Activated naive CD4-positive, alpha-beta T cell treated with anti-CD3 and anti-CD28 coated beads for 36 hours (primary cell): ENCODE measurements at regions of chr6 and their contacts with region 1.

Region 1: DNA sequence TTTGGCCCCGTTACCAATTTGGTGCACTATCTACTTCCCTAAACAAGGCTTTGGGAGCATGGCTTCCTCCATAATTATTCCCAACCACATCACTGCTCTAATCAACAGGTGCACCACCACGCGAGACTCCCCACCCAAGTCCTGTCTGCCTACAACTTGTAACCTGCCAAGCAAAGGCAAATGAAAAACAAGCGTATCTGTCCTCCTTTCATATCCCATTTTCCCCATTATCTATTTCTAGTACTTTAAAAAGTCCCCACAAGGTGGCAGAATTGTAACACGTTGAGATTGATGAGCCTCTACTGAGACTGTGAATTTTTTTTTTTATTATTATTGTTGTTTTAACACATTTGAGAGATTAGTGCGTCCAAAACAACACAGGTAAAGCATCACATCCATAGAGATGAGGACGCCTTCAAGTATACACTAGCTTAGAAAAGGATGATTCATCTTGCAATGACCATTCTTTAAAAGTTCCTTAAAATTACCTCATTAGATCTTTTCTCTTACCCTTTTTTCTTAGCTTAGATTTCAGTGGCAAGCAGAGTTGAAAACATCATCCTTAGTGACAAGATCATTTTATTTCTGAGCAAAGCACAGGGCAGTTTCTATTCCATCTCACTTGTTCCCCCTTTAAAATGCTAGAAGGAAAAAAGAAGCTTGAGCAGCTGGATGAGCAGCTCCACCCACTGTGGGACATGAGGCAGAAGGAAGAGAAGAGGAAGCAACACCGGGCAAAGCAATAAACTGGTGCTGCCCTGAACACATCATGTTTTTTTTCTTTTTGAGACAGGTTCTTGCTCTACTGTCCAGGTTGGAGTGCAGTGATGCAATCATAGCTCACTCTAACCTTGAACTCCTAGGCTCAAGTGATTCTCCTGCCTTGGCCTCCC is 210.8 kb downstream of the ARHGAP18 start:
- DNase-seq: no peak
- H3K4me3 Mint-ChIP-seq: peak overlapping the region; percentile 64
- H3K27ac Mint-ChIP-seq: peak overlapping the region; percentile 91
- H3K4me1 Mint-ChIP-seq: peaks cover 72% of the 10 kb centered on the region
- H3K27me3 Mint-ChIP-seq: no peaks in the 10 kb centered on the region

Region 2: DNA sequence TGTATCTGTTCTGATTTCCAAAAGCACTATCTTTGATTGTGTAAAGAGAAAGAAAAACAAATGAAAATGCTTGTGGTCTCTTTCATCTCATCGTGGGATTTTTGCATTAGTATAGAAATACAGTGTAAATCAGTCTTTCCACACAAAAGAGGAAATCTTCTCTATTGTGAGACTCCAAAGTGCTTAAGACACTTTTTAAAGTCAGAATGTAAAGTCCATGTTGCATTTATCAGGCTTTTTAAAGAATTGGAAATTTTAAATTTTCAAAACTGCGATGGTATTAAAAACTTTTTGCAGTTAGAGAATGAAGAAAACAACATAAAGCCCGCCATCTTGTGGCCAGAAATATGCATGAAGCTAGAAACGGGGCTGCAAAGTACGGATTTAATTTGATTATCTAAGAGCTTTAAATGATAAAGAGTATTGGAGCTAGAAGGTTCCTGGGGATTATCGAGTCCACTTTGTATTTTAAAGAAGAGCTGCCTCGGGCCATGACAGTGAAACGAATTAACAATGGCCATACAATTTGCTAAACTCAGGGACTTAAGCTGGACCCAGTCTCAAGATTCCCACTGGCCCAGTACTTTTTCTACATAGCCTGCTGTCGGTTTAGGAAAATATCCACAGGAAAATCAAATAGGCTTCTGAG is 128.8 kb before region 1 on chr6:
- CTCF ChIA-PET with region 1: interaction called, 4 read pairs
- intact Hi-C with region 1: loop called (anchors 2 kb)
- DNase-seq: peak; percentile 77
- H3K4me3 Mint-ChIP-seq: no peak overlapping the region
- H3K27ac Mint-ChIP-seq: no peak overlapping the region
- H3K4me1 Mint-ChIP-seq: peaks cover 20% of the 10 kb centered on the region
- H3K27me3 Mint-ChIP-seq: no peaks in the 10 kb centered on the region

Region 3: DNA sequence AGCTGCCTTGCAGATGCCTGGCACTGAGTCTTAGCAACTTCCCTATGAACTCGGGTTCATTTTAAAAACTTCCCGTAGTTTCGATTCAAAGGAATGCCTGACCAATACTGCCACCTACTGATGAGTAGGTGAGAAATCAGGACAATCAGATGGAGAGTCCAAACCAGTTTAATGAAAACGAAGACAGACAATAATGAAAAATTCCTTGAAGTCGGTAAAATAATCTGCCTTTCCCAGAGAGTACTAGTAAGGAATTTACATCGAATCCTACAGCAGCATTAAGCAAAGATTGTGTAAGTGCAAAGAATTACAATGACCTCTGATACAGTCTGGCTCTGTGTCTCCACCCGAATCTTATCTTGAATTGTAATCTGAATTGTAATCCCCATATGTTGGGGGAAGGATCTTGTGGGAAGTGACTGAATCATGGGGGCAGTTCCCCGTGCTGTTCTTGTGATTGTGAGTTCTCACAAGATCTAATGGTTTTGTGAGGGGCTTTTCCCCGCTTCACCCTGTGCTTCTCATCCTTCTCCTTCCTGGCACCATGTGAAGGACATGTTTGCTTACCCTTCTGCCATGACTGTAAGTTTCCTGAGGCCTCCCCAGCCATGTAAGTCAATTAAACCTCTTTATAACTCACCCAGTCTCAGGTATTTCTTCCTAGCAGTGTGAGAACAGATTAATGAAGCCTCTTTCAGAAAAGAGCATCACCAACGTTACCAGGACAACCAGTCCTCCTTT is 76.4 kb after region 1 on chr6:
- CTCF ChIA-PET with region 1: interaction called, 9 read pairs
- intact Hi-C with region 1: loop called (anchors 1 kb)
- DNase-seq: no peak
- H3K4me3 Mint-ChIP-seq: no peak overlapping the region
- H3K27ac Mint-ChIP-seq: no peak overlapping the region
- H3K4me1 Mint-ChIP-seq: peaks cover 7% of the 10 kb centered on the region
- H3K27me3 Mint-ChIP-seq: no peaks in the 10 kb centered on the region

Region 4: DNA sequence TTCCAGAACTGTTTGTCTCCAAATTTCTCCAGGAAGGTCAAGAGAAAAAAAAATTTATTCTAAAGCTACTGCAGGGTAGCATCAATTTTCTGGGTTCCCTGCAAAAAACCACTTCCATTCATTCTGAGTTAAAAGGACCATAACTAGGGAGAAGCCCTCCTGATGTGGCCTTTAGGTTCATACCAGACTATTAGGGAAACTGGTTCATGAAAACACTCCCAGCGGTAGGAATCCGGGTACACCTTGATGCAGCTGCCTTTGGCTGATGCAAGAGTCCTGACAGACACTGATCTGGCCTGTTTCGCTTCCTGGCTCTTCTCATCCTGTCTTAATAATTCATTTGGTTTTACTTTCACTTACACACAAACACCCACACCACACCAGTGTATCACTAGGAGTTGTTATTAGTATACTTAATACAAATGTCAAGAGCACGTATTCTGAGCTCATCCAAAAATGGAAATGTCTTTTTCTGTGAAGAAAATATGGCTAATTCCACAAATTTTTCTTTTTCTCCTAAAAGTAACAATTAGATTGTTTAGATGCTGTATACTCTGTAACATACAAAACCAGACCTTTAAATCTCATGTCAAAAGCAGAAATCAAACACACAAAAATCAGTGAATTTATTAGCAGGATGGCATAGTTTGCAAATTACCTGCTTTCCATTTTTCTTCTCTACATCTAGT is 249.2 kb after region 1 on chr6:
- CTCF ChIA-PET with region 1: interaction called, 3 read pairs
- intact Hi-C with region 1: loop called (anchors 1 kb)
- DNase-seq: peak; percentile 81
- H3K4me3 Mint-ChIP-seq: peak overlapping the region; percentile 46
- H3K27ac Mint-ChIP-seq: peak overlapping the region; percentile 93
- H3K4me1 Mint-ChIP-seq: peaks cover 68% of the 10 kb centered on the region
- H3K27me3 Mint-ChIP-seq: no peaks in the 10 kb centered on the region

Region 5: DNA sequence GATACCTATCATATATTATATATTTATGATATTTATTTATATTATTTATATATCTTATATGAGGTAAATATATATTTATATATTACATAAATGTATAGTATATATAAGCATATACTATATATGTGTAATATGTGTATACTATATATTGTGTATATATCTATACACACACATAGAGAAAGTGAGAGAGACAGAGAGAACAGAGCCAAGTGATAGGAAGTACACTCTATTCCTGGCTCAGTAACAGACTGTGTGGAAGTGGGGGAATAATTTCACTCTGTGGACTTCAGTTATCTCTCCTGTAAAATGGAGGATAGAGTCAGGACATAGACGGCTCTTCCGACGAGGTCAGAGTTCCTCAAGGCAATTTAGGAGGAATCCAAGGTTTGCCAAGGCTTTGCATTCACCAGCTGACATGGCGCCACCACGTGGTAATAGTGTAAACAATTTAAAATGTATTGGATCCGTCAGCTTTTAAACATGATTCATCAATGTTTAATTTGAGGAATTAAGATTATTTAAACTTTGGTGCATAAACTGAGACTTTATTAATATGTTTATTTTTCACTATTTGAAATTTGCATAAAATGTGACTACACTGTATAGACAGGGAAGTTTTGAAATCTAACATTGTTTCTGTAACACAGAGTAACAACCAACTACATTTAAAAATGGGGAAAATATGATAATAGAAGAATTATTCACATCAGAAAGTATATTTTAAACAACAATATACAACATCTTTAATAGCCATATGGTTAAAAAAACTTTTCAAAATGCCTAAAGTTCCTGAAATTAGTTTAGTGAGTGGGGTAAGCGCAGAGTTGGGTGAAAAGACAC is 437.4 kb after region 1 on chr6:
- CTCF ChIA-PET with region 1: interaction called, 5 read pairs
- intact Hi-C with region 1: loop called (anchors 1 kb)
- DNase-seq: peak; percentile 63
- H3K4me3 Mint-ChIP-seq: no peak overlapping the region
- H3K27ac Mint-ChIP-seq: no peak overlapping the region
- H3K4me1 Mint-ChIP-seq: peaks cover 2% of the 10 kb centered on the region
- H3K27me3 Mint-ChIP-seq: peaks cover 3% of the 10 kb centered on the region